ENCODE measurements at regions of chr9 and their contacts with region 1.

Region 1: DNA sequence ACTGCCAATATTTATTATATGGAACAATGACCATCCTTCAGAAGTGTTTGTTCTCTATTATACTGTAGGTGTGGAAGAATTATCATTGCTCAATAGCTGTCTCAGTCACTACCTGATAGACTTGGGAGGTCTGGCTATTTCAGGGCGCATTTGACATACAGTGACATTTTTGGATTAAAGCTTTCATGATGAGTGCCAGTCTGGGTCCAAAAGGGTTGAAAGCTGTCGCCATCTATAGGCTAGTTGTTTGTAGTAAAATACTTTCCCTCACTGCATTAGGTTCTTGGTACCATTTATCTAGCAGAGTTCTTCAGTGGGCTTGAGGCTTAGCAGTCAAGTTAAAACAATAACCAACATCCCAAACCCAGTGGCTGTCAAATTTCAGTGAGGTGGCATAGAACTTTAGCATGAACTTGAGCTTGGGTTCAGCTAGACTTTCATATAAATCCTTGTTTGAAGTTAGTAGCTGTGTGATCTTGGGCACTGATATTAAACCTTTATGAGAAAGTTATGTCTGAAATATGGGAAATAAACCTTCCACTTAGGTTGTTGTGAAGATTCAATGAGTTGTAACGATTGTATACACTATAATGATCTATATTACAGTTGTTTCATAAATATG is 110.5 kb upstream of the CDKN2B start:
- DNase-seq: peak; percentile 59
- H3K4me3 ChIP-seq: no peak overlapping the region
- H3K27ac ChIP-seq: no peak overlapping the region
- H3K4me1 ChIP-seq: peaks cover 27% of the 10 kb centered on the region
- H3K27me3 ChIP-seq: no peaks in the 10 kb centered on the region

Region 2: DNA sequence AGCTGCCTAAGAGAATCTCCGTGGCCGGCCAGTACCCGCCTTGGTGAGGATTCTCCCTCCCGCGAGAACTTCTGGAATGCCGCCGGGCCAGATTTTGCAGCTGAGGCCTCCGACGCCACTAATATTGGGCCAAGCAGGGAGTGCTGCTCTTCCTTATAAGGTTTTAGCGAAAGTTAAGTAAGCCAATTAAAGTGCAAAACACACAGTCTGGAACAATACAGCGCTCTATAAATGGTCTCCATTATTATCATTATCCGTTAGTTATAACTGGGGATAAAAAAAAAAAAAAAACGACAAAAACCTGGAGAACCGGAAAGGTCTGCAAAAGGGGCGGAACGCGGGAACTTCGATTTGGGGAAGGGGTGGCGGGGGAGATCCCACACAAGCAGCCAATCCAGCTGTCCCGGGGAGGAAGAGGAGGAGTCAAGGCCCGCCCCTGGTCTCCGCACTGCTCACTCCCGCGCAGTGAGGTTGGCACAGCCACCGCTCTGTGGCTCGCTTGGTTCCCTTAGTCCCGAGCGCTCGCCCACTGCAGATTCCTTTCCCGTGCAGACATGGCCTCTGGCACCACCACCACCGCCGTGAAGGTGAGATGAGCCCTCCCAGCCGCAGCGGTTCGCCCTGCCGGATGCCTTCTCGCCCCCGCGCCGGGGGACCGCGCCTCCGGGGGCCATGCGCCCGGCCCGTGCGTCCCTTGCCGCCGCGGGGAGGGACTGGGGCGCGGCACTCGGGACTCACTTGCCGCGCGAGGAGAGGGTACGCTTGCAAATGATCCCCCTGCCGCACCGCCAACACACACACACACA is 317.2 kb before region 1 on chr9 and contains the start of gene MTAP:
- in situ Hi-C with region 1: loop called (anchors 25 kb)
- DNase-seq: peak; percentile 94
- H3K4me3 ChIP-seq: peak within 1 kb of the TSS; percentile 89
- H3K27ac ChIP-seq: peak within 1 kb of the TSS; percentile 84
- H3K4me1 ChIP-seq: peaks cover 23% of the 10 kb centered on the region
- H3K27me3 ChIP-seq: no peaks in the 10 kb centered on the region
- total RNA-seq, gene MTAP: 26.7 and 29.8 TPM in 2 replicates

Region 3: GRCh38 chr9:22238809-22239684 is 119.4 kb after region 1 on chr9:
- in situ Hi-C with region 1: loop called (anchors 10 kb)
- DNase-seq: peak; percentile 77
- H3K4me3 ChIP-seq: no peak overlapping the region
- H3K27ac ChIP-seq: no peak overlapping the region
- H3K4me1 ChIP-seq: peaks cover 24% of the 10 kb centered on the region
- H3K27me3 ChIP-seq: no peaks in the 10 kb centered on the region

Region 4: DNA sequence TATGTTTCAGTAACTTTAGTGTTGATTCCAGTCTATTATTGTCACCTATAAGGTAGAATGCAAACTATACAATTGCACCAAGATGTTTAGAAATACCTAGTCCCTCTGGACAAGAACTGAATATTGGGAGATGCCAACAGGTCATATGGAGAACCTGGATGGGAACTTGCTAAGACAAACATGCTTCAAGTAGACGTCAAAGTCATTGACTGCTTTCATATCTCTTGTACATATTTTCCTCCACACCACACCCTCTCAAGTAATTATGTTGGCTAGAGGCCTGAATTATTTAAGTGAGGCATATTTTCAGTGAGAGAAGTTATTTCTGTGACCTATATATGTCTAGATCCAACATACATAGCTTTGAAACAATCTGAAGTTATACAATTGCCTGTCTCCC is 1253.1 kb after region 1 on chr9:
- in situ Hi-C with region 1: no loop called
- DNase-seq: no peak
- H3K4me3 ChIP-seq: no peak overlapping the region
- H3K27ac ChIP-seq: no peak overlapping the region
- H3K4me1 ChIP-seq: peaks cover 14% of the 10 kb centered on the region
- H3K27me3 ChIP-seq: no peaks in the 10 kb centered on the region